ENCODE measurements at regions of chr15 and their contacts with region 1.

Region 1: GRCh38 chr15:39874890-39875549 is 45.0 kb downstream of the GPR176 start:
- DNase-seq: peak; percentile 36
- H3K4me3 ChIP-seq: no peak overlapping the region
- H3K27ac ChIP-seq: no peak overlapping the region
- H3K4me1 ChIP-seq: peaks cover 11% of the 10 kb centered on the region
- H3K27me3 ChIP-seq: no peaks in the 10 kb centered on the region
- CTCF ChIP-seq: peak; percentile 61 to 70

Region 2: DNA sequence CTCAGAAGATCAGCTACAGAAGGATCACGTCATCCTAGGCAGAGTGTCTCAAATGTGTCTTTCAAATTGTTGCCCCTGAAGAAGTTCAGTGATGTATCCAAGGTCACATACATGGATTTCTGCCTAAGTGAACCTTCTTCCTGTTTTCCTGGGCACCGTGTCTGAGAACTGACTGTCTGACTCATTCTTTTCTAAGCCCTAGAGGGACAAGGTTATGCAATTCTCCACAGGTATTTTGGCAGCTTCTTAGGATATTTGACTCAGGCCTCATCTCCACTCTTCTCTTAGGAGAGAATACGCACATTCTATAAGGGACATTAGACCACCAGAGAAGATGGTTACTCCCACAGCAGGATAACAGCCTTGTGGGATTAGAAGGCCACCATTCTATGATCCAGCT is 686.1 kb before region 1 on chr15:
- CTCF ChIA-PET with region 1: no interaction called
- dilution Hi-C with region 1: no loop called
- in situ Hi-C with region 1: no loop called
- intact Hi-C with region 1: loop called (anchors 5 kb)
- DNase-seq: peak; percentile 94
- H3K4me3 ChIP-seq: no peak overlapping the region
- H3K27ac ChIP-seq: peak overlapping the region; percentile 85
- H3K4me1 ChIP-seq: peaks cover 78% of the 10 kb centered on the region
- H3K27me3 ChIP-seq: no peaks in the 10 kb centered on the region
- CTCF ChIP-seq: no peak

Region 3: GRCh38 chr15:39686000-39686613 is 188.9 kb before region 1 on chr15:
- CTCF ChIA-PET with region 1: no interaction called
- dilution Hi-C with region 1: no loop called
- in situ Hi-C with region 1: no loop called
- intact Hi-C with region 1: loop called (anchors 1 kb)
- DNase-seq: peak; percentile 36
- H3K4me3 ChIP-seq: no peak overlapping the region
- H3K27ac ChIP-seq: no peak overlapping the region
- H3K4me1 ChIP-seq: no peaks in the 10 kb centered on the region
- H3K27me3 ChIP-seq: no peaks in the 10 kb centered on the region
- CTCF ChIP-seq: peak; percentile 70 to 71

Region 4: DNA sequence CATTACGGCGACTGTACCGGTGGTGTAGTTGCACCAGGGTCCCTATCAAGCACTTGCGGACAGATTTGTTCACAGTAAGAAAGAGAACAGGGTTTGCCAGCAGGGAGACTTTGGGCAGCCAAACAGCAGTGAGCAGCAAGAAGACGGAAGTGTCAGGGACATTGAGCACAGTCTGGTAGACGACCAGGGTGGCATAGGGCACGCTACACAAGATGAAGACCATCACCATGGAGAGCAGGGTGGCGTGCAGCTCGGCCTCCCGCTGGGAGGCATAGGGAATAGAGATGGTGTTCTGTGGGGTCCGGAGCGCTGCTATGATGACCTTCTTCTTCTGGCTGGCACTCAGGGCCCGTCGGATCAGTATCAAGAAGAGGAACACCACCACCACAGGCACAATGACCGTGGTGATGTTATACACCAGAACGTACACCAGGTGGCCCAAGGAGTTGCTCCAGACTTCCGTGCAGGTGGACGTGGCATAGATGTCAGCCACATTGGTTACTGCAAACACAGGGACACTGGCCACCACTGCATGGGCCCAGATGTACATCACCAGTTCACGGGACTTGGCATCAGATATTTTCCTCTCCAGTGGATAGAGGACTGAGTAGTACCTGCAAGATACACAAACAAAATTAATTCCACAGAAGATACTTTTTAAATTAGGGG is 73.2 kb before region 1 on chr15:
- CTCF ChIA-PET with region 1: no interaction called
- dilution Hi-C with region 1: no loop called
- in situ Hi-C with region 1: no loop called
- intact Hi-C with region 1: loop called (anchors 1 kb)
- DNase-seq: peak; percentile 28
- H3K4me3 ChIP-seq: no peak overlapping the region
- H3K27ac ChIP-seq: no peak overlapping the region
- H3K4me1 ChIP-seq: peaks cover 16% of the 10 kb centered on the region
- H3K27me3 ChIP-seq: no peaks in the 10 kb centered on the region
- CTCF ChIP-seq: peak; percentile 58 to 70

Region 5: DNA sequence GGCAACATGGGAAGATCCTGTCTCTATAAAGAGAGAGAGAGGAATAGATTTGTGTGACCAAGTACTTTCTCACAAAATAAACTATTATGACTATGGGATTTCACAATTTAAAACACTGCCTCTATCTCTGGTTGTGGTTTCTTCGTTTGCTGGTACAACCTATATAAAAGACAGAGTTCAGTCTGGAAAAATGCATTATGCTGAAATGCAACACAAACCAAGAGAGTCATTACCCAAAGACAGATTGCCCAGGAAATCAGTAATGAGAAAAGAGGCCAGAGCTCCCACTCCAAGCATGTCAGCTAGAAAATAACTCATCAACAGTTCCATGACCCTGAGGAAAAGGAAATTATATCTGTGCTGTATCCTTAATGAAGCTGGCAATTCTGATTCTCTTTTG is 21.8 kb after region 1 on chr15:
- CTCF ChIA-PET with region 1: no interaction called
- dilution Hi-C with region 1: no loop called
- in situ Hi-C with region 1: no loop called
- intact Hi-C with region 1: no loop called
- DNase-seq: no peak
- H3K4me3 ChIP-seq: no peak overlapping the region
- H3K27ac ChIP-seq: no peak overlapping the region
- H3K4me1 ChIP-seq: no peaks in the 10 kb centered on the region
- H3K27me3 ChIP-seq: no peaks in the 10 kb centered on the region
- CTCF ChIP-seq: no peak

Region 6: DNA sequence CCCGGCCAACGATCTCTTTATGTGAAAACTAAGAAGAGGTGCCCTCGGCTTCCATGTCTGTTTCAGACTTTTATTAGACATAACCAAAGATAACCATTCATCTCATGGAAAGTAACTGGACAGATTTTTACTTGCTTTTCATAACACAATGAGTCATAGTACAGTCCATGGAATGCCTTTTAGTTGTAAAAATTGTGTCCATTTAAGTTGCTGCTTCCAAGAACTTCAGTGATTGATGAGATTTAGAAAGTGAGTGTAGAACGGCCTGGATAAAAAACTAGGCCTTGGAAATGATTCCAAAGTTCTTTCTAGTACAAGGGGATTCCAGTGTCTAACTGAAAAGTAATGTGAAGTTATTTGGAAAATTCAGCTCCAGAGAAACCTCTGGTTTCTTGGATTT is 69.7 kb after region 1 on chr15:
- CTCF ChIA-PET with region 1: no interaction called
- dilution Hi-C with region 1: no loop called
- in situ Hi-C with region 1: no loop called
- intact Hi-C with region 1: no loop called
- DNase-seq: no peak
- H3K4me3 ChIP-seq: no peak overlapping the region
- H3K27ac ChIP-seq: no peak overlapping the region
- H3K4me1 ChIP-seq: peaks cover 9% of the 10 kb centered on the region
- H3K27me3 ChIP-seq: no peaks in the 10 kb centered on the region
- CTCF ChIP-seq: no peak